ENCODE measurements at regions of chr10 and their contacts with region 1.

Region 1: GRCh38 chr10:29543715-29544114 is 91.1 kb downstream of the SVIL start:
- DNase-seq: no peak
- ATAC-seq: no peak
- H3K4me3 ChIP-seq: no peak overlapping the region
- H3K4me3 Mint-ChIP-seq: no peak overlapping the region
- H3K27ac ChIP-seq: no peak overlapping the region
- H3K27ac Mint-ChIP-seq: no peak overlapping the region
- H3K4me1 ChIP-seq: peaks cover 0 to 14% of the 10 kb centered on the region in 2 experiments
- H3K4me1 Mint-ChIP-seq: peaks cover 13 to 19% (median 14%) of the 10 kb centered on the region in 3 donors
- H3K27me3 ChIP-seq: no peaks in the 10 kb centered on the region
- H3K27me3 Mint-ChIP-seq: no peaks in the 10 kb centered on the region

Region 2: DNA sequence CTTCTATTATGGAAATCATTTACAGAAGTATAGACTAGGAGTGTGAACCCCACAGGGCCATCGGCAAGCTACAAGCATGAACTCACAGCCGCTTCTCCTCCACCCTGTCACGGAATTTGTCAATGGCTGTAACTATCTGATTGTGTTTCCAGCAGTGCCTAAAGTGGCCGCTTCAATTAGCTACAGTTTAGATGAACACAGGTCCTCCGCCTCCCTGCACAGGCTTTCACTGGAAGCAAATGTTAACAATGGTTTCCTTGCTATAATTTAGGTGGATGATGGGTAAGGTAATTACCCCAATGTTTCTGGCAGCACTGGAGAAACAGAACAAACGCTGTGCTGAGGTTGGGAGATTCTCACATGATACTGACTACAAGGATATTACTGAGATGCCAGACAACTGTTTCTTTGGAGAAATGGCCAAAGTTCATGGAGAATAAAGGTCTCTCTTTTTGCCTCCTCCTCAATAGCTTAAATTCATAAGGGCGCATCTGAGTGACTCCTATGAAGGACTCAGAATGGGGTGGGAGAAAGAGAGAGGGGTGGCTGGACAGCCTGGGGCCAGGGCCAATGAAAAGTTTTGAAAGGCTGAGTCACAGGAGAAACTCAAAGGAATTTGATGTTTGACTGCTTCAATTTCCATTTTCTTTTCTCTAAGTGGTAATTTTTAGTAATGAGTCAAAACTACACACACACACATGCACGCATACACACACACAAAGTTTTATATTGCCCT is 12.2 kb after region 1 on chr10:
- CTCF ChIA-PET with region 1: interaction called in 1 of 2 experiments, 10 read pairs
- POLR2A ChIA-PET with region 1: no interaction called
- DNase-seq: no peak
- ATAC-seq: no peak
- H3K4me3 ChIP-seq: no peak overlapping the region
- H3K4me3 Mint-ChIP-seq: no peak overlapping the region
- H3K27ac ChIP-seq: no peak overlapping the region
- H3K27ac Mint-ChIP-seq: no peak overlapping the region
- H3K4me1 ChIP-seq: no peaks in the 10 kb centered on the region
- H3K4me1 Mint-ChIP-seq: no peaks in the 10 kb centered on the region
- H3K27me3 ChIP-seq: no peaks in the 10 kb centered on the region
- H3K27me3 Mint-ChIP-seq: no peaks in the 10 kb centered on the region